Naive thymus-derived CD4-positive, alpha-beta T cell (primary cell): ENCODE measurements at regions of chr16 and their contacts with region 1.

Region 1: DNA sequence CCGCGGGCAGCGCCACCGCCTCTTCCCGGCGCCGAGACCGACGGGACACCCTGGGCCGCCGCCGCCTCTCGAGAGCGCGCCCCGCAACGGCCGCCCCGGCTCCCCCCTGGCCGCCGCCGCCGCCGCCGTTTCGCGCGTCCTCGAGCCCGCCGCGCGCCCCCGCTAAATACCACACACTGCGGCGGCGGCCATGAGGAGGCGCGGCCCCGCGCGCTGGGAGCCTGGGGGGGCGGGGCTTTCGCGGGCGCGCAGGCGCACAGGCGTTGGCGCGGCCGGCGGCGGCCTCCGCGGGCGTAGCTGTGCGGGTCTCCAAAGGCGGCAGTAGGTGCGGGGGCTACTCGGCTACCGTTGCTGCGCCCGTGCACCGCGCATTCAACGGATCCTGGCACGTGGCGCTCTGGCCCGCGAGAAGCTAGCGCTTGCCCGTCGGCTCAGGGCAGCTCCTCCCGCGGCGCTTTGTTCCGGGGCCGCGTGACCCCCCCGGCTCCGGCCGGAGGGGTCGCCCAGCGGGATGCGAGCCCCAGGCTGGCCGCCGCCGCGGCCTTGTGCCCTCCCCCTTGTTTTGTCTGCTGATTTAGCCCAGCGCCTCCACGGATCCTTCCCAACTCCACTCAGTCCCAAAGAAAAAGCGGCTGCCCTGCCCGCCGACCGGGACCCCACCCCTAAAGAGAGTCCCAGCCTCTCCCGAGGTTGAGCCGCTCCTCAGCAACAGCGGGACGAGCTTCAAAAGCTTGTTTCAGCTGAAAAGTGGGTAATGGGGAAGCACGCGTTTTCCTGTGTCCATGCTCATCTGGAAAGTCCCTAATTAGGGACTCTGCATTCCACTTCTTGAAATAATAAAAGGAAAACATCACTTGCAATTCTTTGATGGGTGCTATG is at the start of gene SIAH1:
- DNase-seq: peak; percentile 79 to 95 (median 89)
- ATAC-seq: peak; percentile 95
- H3K4me3 ChIP-seq: peak within 1 kb of the TSS; percentile 88
- H3K4me3 Mint-ChIP-seq: peak within 1 kb of the TSS; percentile 90 to 98 (median 94)
- H3K27ac ChIP-seq: peak within 1 kb of the TSS; percentile 94
- H3K27ac Mint-ChIP-seq: peak within 1 kb of the TSS; percentile 80 to 97 (median 94)
- H3K4me1 ChIP-seq: peaks cover 12 to 16% of the 10 kb centered on the region in 2 donors
- H3K4me1 Mint-ChIP-seq: peaks cover 18 to 39% (median 31%) of the 10 kb centered on the region in 7 donors
- H3K27me3 ChIP-seq: no peaks in the 10 kb centered on the region
- H3K27me3 Mint-ChIP-seq: peaks cover 0 to 5% (median 0%) of the 10 kb centered on the region in 5 donors
- total RNA-seq, gene SIAH1: 14.5 to 51.1 (median 19.8) TPM

Region 2: DNA sequence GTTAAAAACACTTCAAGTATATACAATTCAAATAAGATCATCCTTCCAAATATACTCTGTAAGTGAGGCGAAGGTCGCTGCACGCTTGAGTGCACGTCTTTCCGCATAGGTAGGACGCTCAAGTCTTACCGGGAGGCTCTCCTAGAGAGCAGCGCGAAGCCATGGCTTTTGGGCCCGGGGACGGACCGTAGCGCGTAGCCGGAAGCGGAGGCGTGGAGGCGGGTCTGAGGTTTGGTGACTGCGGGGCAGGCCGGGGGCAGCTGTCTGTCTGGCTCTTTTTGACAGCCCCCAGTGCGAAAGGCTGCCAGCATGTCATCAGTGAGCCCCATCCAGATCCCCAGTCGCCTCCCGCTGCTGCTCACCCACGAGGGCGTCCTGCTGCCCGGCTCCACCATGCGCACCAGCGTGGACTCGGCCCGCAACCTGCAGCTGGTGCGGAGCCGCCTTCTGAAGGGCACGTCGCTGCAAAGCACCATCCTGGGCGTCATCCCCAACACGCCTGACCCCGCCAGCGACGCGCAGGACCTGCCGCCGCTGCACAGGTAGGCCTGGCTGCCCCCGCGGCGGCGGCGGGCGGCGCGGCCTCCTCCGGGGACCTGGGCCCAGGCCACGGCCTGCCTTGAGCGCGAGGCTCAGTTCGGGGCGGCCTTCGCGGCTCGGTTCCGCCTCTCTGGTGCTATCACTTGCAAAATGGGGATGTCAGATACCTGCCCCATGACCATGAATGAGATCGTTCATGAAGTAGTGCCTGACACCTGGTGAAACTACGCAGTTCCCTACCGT is 141.2 kb before region 1 on chr16 and contains the start of gene LONP2:
- CTCF ChIA-PET with region 1: no interaction called
- POLR2A ChIA-PET with region 1: no interaction called
- intact Hi-C with region 1: loop called (anchors 1 to 2 kb)
- DNase-seq: peak; percentile 79 to 97 (median 93)
- ATAC-seq: peak; percentile 99
- H3K4me3 ChIP-seq: peak within 1 kb of the TSS; percentile 78
- H3K4me3 Mint-ChIP-seq: peak within 1 kb of the TSS; percentile 93 to 100 (median 96)
- H3K27ac ChIP-seq: peak within 1 kb of the TSS; percentile 78
- H3K27ac Mint-ChIP-seq: peak within 1 kb of the TSS; percentile 89 to 98 (median 96)
- H3K4me1 ChIP-seq: peaks cover 25 to 27% of the 10 kb centered on the region in 2 donors
- H3K4me1 Mint-ChIP-seq: peaks cover 29 to 56% (median 45%) of the 10 kb centered on the region in 7 donors
- H3K27me3 ChIP-seq: no peaks in the 10 kb centered on the region
- H3K27me3 Mint-ChIP-seq: no peaks in the 10 kb centered on the region
- total RNA-seq, gene LONP2: 62.3 to 124 (median 83.0) TPM

Region 3: GRCh38 chr16:48300391-48300856 is 85.1 kb before region 1 on chr16:
- CTCF ChIA-PET with region 1: no interaction called
- POLR2A ChIA-PET with region 1: no interaction called
- intact Hi-C with region 1: no loop called
- DNase-seq: no peak
- ATAC-seq: no peak
- H3K4me3 ChIP-seq: no peak overlapping the region
- H3K4me3 Mint-ChIP-seq: no peak overlapping the region
- H3K27ac ChIP-seq: no peak overlapping the region
- H3K27ac Mint-ChIP-seq: peak overlapping the region in 7 of 9 donors; percentile 10 to 76 (median 56)
- H3K4me1 ChIP-seq: no peaks in the 10 kb centered on the region
- H3K4me1 Mint-ChIP-seq: peaks cover 0 to 8% (median 2%) of the 10 kb centered on the region in 7 donors
- H3K27me3 ChIP-seq: no peaks in the 10 kb centered on the region
- H3K27me3 Mint-ChIP-seq: no peaks in the 10 kb centered on the region

Region 4: GRCh38 chr16:48318630-48319029 is 66.9 kb before region 1 on chr16:
- CTCF ChIA-PET with region 1: no interaction called
- POLR2A ChIA-PET with region 1: interaction called, 4 read pairs
- intact Hi-C with region 1: loop called in 1 of 2 experiments (anchors 2 kb)
- DNase-seq: peak in 8 of 9 donors; percentile 25 to 83 (median 76)
- ATAC-seq: peak; percentile 92
- H3K4me3 ChIP-seq: peak overlapping the region; percentile 25
- H3K4me3 Mint-ChIP-seq: peak overlapping the region; percentile 62 to 88 (median 80)
- H3K27ac ChIP-seq: peak overlapping the region; percentile 9
- H3K27ac Mint-ChIP-seq: peak overlapping the region; percentile 58 to 88 (median 82)
- H3K4me1 ChIP-seq: peaks cover 20 to 35% of the 10 kb centered on the region in 2 donors
- H3K4me1 Mint-ChIP-seq: peaks cover 17 to 77% (median 62%) of the 10 kb centered on the region in 7 donors
- H3K27me3 ChIP-seq: no peaks in the 10 kb centered on the region
- H3K27me3 Mint-ChIP-seq: no peaks in the 10 kb centered on the region

Region 5: GRCh38 chr16:48365581-48366164 is 19.8 kb before region 1 on chr16:
- CTCF ChIA-PET with region 1: no interaction called
- POLR2A ChIA-PET with region 1: interaction called, 50 read pairs
- intact Hi-C with region 1: loop called (anchors 1 kb)
- DNase-seq: peak; percentile 66 to 86 (median 73)
- ATAC-seq: peak; percentile 95
- H3K4me3 ChIP-seq: peak overlapping the region; percentile 88
- H3K4me3 Mint-ChIP-seq: peak overlapping the region; percentile 83 to 100 (median 94)
- H3K27ac ChIP-seq: peak overlapping the region; percentile 77
- H3K27ac Mint-ChIP-seq: peak overlapping the region; percentile 89 to 100 (median 98)
- H3K4me1 ChIP-seq: peaks cover 14 to 15% of the 10 kb centered on the region in 2 donors
- H3K4me1 Mint-ChIP-seq: peaks cover 24 to 71% (median 54%) of the 10 kb centered on the region in 7 donors
- H3K27me3 ChIP-seq: no peaks in the 10 kb centered on the region
- H3K27me3 Mint-ChIP-seq: no peaks in the 10 kb centered on the region

Region 6: DNA sequence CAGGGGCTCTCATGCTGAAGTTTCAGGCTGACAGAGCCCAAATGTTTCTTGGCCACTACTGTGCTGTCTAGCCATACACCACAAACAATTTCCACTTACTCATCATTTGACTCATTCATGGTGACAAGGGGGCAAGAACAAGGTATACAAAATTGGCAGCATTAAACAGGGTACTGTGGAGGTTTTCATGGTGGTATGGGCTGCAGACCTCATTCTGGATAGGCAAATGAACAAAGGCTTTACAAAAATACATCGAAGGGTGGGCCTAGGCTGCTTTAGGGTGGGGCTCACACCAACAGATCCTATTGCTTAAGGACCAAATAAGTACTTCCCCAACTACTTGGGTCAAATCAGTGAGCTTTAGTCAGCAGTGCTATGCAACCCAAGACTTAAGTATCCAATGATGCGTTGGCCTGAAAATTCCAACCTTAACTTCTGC is 171.4 kb after region 1 on chr16:
- CTCF ChIA-PET with region 1: no interaction called
- POLR2A ChIA-PET with region 1: no interaction called
- intact Hi-C with region 1: loop called in 1 of 2 experiments (anchors 5 kb)
- DNase-seq: no peak
- ATAC-seq: peak; percentile 63
- H3K4me3 ChIP-seq: no peak overlapping the region
- H3K4me3 Mint-ChIP-seq: peak overlapping the region in 6 of 10 donors; percentile 12 to 78 (median 30)
- H3K27ac ChIP-seq: no peak overlapping the region
- H3K27ac Mint-ChIP-seq: peak overlapping the region in 7 of 9 donors; percentile 0 to 84 (median 63)
- H3K4me1 ChIP-seq: peaks cover 19 to 24% of the 10 kb centered on the region in 2 donors
- H3K4me1 Mint-ChIP-seq: peaks cover 45 to 92% (median 80%) of the 10 kb centered on the region in 7 donors
- H3K27me3 ChIP-seq: no peaks in the 10 kb centered on the region
- H3K27me3 Mint-ChIP-seq: no peaks in the 10 kb centered on the region

Region 7: GRCh38 chr16:48676836-48677235 is 291.3 kb after region 1 on chr16:
- CTCF ChIA-PET with region 1: no interaction called
- POLR2A ChIA-PET with region 1: no interaction called
- intact Hi-C with region 1: no loop called
- DNase-seq: no peak
- ATAC-seq: no peak
- H3K4me3 ChIP-seq: no peak overlapping the region
- H3K4me3 Mint-ChIP-seq: no peak overlapping the region
- H3K27ac ChIP-seq: no peak overlapping the region
- H3K27ac Mint-ChIP-seq: no peak overlapping the region
- H3K4me1 ChIP-seq: no peaks in the 10 kb centered on the region
- H3K4me1 Mint-ChIP-seq: no peaks in the 10 kb centered on the region
- H3K27me3 ChIP-seq: no peaks in the 10 kb centered on the region
- H3K27me3 Mint-ChIP-seq: peaks cover 0 to 5% (median 3%) of the 10 kb centered on the region in 5 donors